RWPE1 (cell line): ENCODE measurements at regions of chr16 and their contacts with region 1.

Region 1: DNA sequence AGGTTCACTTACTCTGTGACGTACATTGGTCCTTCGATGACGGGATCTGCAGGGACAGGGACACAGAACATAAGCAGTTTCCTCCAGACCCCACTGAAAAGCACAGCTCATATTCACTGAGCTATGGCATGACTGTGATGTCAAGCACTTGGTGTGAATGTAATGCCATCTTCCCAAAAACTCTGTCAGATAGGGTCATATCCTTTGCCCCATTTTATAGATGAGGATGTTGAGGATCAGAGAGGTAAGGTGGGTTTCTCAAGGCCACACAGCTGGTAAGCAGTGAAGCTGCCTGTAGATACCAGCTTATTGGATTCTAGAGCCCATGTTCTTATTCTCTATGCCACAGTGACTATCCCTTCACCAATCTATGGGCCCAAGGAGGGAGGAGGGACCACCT is 2.5 kb downstream of the ERN2 start:
- DNase-seq: no peak
- H3K27ac ChIP-seq: no peak overlapping the region
- CTCF ChIP-seq: no peak

Region 2: GRCh38 chr16:23629516-23629915 is 81.0 kb before region 1 on chr16:
- CTCF ChIA-PET with region 1: no interaction called
- POLR2A ChIA-PET with region 1: no interaction called
- DNase-seq: peak; percentile 19
- H3K27ac ChIP-seq: no peak overlapping the region
- CTCF ChIP-seq: no peak

Region 3: GRCh38 chr16:23770744-23771426 is 60.4 kb after region 1 on chr16:
- CTCF ChIA-PET with region 1: interaction called, 11 read pairs
- POLR2A ChIA-PET with region 1: no interaction called
- DNase-seq: peak; percentile 85
- H3K27ac ChIP-seq: no peak overlapping the region
- CTCF ChIP-seq: no peak